ENCODE measurements at regions of chr15 and their contacts with region 1.

Region 1: GRCh38 chr15:56491110-56491722 is 26.3 kb upstream of the MNS1 start:
- DNase-seq: peak; percentile 72
- H3K4me3 Mint-ChIP-seq: no peak overlapping the region
- H3K27ac Mint-ChIP-seq: no peak overlapping the region
- H3K4me1 Mint-ChIP-seq: no peaks in the 10 kb centered on the region
- H3K27me3 Mint-ChIP-seq: no peaks in the 10 kb centered on the region
- CTCF ChIP-seq: peak; percentile 79

Region 2: GRCh38 chr15:56552668-56553067 is 61.5 kb after region 1 on chr15:
- CTCF ChIA-PET with region 1: no interaction called
- POLR2A ChIA-PET with region 1: no interaction called
- intact Hi-C with region 1: no loop called
- DNase-seq: no peak
- H3K4me3 Mint-ChIP-seq: no peak overlapping the region
- H3K27ac Mint-ChIP-seq: no peak overlapping the region
- H3K4me1 Mint-ChIP-seq: no peaks in the 10 kb centered on the region
- H3K27me3 Mint-ChIP-seq: no peaks in the 10 kb centered on the region
- CTCF ChIP-seq: no peak

Region 3: DNA sequence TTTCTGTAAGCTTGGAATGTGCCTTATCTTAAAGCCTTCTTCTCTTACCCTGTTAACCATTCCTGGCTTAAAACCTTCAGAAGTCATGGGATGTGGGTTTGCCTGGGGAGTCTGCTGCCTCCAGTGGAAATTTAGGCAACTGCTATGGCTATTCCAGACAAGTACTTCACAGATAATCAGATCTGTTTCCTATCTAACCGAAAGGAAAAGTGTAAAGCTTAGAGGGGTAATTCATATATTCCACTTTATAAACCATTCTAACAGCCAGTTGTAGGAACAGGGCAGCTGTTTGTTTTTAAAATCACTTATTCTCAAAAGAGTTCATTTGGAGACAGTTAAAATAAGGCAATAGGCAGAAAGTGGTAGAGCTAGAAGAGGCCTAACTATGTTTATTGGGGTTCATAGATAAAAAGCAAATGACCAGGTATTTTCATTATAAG is 647.2 kb after region 1 on chr15:
- CTCF ChIA-PET with region 1: interaction called, 3 read pairs
- POLR2A ChIA-PET with region 1: no interaction called
- intact Hi-C with region 1: loop called (anchors 1 kb)
- DNase-seq: peak; percentile 65
- H3K4me3 Mint-ChIP-seq: no peak overlapping the region
- H3K27ac Mint-ChIP-seq: no peak overlapping the region
- H3K4me1 Mint-ChIP-seq: no peaks in the 10 kb centered on the region
- H3K27me3 Mint-ChIP-seq: no peaks in the 10 kb centered on the region
- CTCF ChIP-seq: peak; percentile 66

Measured in MCF 10A (cell line).